Activated CD4-positive, alpha-beta T cell treated with anti-CD3 and anti-CD28 coated beads, Interleukin-2, amount 10 ng/mL, durations not matched to agents 24 days and 14 days (primary cell): ENCODE measurements at regions of chr12 and their contacts with region 1.

Region 1: DNA sequence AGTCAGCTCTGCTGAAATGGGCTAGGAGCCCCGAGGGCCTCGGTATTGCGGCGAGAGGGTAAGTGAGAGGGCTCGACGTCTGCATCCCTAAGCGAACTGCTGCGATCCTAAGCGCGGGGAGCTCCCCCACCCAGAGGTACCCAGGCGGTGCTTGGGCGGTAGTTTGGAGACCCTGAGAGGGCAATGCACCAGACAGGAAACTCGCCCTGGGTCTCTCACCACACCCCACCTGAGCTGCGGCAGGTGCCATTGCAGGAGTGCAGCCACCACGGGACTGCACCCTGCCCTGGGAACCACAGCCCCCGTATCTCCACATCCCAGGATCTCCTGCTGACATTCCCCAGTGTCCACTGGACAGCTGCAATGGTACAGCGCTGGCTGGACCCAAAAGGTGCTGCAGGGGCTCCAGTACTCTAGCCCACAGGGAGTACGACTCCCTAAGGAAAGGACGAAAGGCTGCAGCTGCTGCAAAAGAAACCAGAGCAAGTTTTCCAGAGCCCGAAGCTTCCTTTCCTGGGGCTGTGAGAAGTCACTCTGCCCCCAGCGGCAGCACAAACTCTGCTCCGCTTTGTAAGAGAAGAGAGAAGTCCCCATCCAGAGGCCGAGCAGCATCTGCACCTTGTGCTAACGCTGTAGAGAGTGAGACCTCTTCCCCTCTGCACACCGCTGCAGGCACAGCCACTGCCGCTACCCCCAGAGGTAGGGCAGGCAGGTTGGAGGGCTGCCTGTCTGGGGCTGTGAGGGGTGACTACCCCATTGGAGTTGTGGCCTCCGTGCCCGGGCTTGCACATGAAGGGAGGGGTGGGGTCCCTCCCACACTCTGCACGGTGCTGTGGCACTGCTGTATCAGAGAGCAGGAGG is 31.1 kb upstream of the MON2 start:
- DNase-seq: peak; percentile 80
- H3K4me3 Mint-ChIP-seq: peak overlapping the region; percentile 86
- H3K27ac Mint-ChIP-seq: no peak overlapping the region
- H3K4me1 Mint-ChIP-seq: peaks cover 13% of the 10 kb centered on the region
- H3K27me3 Mint-ChIP-seq: peaks cover 47% of the 10 kb centered on the region

Region 2: GRCh38 chr12:61023231-61023630 is 1412.3 kb before region 1 on chr12:
- intact Hi-C with region 1: no loop called
- DNase-seq: no peak
- H3K4me3 Mint-ChIP-seq: no peak overlapping the region
- H3K27ac Mint-ChIP-seq: no peak overlapping the region
- H3K4me1 Mint-ChIP-seq: no peaks in the 10 kb centered on the region
- H3K27me3 Mint-ChIP-seq: no peaks in the 10 kb centered on the region

Region 3: DNA sequence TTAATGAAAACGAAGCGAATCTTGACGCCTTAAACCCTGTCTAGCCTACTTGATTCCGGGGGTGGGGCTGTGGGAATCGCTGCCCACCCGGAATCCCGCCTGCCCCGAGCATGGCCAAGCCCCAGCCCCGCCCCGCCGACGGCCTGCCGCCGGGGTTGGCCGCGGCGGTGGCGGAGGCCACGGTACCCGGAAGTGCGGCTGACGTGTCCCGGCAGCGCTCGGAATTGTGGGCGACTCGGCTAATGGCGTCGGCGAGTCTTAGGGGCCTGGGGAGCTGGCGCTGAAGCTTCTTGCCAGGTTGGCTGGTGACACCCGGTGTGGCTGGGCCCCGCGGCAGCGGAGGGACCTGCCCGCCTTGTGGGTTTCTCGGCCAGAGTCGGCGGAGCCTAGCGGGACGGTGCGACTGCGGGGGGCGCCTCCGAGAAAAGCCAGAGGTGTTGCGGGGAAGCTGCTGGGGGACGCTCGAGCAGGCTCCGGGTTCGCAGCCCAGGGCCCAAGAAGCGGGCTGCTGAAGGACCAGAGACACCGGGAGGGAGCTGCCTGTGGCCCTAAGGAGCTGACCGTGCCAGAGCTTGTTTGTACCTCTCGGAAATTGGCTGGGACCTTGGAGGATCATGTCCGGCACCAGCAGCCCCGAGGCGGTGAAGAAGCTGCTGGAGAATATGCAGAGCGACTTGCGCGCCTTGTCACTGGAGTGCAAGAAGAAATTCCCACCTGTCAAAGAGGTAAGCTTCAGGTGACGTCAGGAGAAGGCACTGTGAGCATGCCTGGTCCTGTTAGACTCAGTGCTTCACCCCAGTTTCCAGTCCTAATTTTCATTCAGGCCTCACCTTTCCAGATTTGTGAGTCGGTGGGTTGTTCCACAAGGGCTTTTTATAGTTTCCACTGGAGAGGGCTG is 31.3 kb after region 1 on chr12 and contains the start of gene MON2:
- intact Hi-C with region 1: loop called (anchors 2 kb)
- DNase-seq: peak; percentile 97
- H3K4me3 Mint-ChIP-seq: peak within 1 kb of the TSS; percentile 86
- H3K27ac Mint-ChIP-seq: peak within 1 kb of the TSS; percentile 93
- H3K4me1 Mint-ChIP-seq: peaks cover 19% of the 10 kb centered on the region
- H3K27me3 Mint-ChIP-seq: peaks cover 8% of the 10 kb centered on the region
- total RNA-seq, gene MON2: 32.8 and 36.4 TPM in 2 replicates

Region 4: DNA sequence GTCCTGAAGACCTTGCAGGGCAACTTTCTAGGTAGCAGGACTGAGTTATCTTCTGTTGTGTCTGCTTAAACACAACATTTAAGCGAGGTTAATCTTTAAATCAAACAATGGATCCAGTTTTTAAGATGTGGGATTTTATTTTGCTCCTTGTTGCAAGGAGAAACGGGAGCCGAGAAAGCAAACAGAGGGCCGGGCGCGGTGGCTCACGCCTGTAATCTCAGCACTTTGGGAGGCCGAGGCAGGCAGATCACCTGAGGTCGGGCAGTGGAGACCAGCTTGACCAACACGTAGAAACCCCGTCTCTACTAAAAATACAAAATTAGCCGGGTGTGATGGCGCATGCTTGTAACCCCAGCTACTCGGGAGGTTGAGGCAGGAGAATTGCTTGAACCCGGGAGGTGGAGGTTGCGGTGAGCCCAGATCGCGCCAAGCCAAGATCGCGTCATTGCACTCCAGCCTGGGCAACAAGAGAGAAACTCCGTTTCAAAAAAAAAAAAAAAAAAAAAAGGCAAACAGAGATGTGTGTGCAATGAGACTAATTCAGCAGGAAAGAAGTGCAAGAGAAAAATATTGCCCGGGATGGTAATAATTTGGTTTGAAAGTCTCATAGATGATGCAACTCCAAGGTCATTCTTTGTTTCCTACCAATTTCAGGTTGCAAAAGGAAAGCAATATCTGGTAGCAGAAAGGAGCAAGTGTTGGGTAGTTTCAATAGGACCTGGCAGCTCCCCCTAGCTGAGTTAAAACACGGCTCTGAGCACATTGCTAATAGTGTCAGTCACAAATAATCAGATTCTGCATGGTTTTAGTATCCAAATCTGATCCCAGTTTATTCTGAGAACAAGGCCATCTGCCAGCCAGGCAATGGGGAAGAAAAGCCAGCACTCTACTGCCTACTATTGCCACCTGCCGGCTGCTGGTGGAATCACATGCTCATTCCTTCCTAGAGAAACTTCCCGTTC is 358.0 kb after region 1 on chr12:
- intact Hi-C with region 1: loop called (anchors 1 kb)
- DNase-seq: peak; percentile 91
- H3K4me3 Mint-ChIP-seq: no peak overlapping the region
- H3K27ac Mint-ChIP-seq: no peak overlapping the region
- H3K4me1 Mint-ChIP-seq: no peaks in the 10 kb centered on the region
- H3K27me3 Mint-ChIP-seq: peaks cover 26% of the 10 kb centered on the region

Region 5: DNA sequence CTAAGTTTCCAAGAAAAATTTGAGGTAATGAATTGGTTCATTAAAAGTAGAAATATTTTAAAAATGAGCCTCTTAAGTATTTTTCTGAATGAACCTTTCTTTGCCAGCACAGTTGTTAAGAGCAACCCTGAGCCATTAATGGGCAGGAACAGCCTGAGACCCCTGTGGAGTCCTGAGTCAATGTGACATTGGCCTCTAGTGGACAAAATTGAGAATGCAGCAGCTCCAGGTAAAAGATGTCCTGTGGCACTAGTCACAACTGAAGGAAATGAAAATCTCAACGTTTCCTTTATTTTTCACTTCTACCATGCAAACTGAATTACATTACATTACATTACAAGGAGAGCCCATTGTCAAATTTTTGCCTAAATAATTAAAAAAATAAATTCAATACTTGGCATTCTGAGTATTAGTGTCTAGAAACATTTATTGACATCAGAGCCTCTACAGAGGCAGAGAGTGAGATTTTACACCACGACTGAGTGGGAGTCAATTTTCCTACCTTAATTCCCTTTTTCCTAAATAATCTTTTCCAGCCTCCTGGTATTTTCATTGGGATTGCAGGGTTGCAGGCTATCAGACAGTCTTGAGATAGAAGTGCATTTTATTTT is 363.7 kb after region 1 on chr12:
- intact Hi-C with region 1: loop called (anchors 1 kb)
- DNase-seq: peak; percentile 87
- H3K4me3 Mint-ChIP-seq: no peak overlapping the region
- H3K27ac Mint-ChIP-seq: no peak overlapping the region
- H3K4me1 Mint-ChIP-seq: no peaks in the 10 kb centered on the region
- H3K27me3 Mint-ChIP-seq: peaks cover 10% of the 10 kb centered on the region

Region 6: DNA sequence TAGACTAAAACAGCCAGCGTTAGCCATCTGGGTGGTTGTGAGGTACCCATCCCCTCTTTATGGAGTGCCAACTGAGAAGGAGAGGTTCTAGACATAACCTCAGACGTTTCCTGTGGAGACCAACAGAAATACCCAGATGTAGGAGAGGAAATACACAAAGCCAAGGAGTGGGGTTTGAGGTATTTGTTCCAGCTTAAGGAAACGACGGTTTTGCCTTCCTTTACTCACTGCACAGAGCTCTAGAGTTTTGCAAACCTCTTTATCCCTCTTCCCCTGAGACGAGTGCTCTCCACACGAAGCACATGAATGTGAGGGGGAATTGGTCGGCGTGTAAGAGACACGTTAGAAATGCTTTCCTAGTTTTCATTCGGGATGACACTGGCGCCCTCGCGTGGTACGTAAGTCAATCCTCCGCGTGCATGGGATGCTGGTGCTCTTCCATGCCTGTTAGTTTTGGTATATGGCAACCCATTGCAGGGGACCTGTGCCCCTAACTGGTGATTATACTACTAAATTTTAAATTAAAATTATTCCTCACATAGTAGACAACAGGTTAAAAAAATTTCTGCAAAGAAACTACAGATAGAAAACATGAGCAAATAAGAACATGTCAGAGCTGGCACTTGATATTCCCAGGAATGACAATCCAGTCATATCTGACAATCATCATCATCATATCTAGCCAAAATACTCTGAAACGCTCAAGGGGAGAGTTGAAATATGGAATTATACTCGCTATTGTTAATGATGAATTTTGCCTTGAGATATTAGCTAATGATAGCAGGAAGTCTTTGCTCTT is 377.7 kb after region 1 on chr12:
- intact Hi-C with region 1: loop called (anchors 5 kb)
- DNase-seq: peak; percentile 75
- H3K4me3 Mint-ChIP-seq: peak overlapping the region; percentile 33
- H3K27ac Mint-ChIP-seq: no peak overlapping the region
- H3K4me1 Mint-ChIP-seq: peaks cover 13% of the 10 kb centered on the region
- H3K27me3 Mint-ChIP-seq: peaks cover 19% of the 10 kb centered on the region